ENCODE measurements at regions of chr4 and their contacts with region 1.

Region 1: GRCh38 chr4:74675673-74676279 is 118.5 kb downstream of the BTC start:
- DNase-seq: peak in 2 of 9 experiments; percentile 21 to 48
- ATAC-seq: peak; percentile 34
- H3K4me3 ChIP-seq: no peak overlapping the region
- H3K4me3 Mint-ChIP-seq: no peak overlapping the region
- H3K27ac ChIP-seq: no peak overlapping the region
- H3K27ac Mint-ChIP-seq: no peak overlapping the region
- H3K4me1 ChIP-seq: no peaks in the 10 kb centered on the region
- H3K4me1 Mint-ChIP-seq: no peaks in the 10 kb centered on the region
- H3K27me3 ChIP-seq: no peaks in the 10 kb centered on the region
- H3K27me3 Mint-ChIP-seq: no peaks in the 10 kb centered on the region
- CTCF ChIP-seq: peak; percentile 21

Region 2: GRCh38 chr4:74189331-74190043 is 486.3 kb before region 1 on chr4:
- CTCF ChIA-PET with region 1: interaction called, 3 read pairs
- POLR2A ChIA-PET with region 1: no interaction called
- intact Hi-C with region 1: loop called (anchors 1 to 10 kb)
- DNase-seq: peak in 2 of 9 experiments; percentile 56 to 70
- ATAC-seq: peak; percentile 57
- H3K4me3 ChIP-seq: no peak overlapping the region
- H3K4me3 Mint-ChIP-seq: no peak overlapping the region
- H3K27ac ChIP-seq: no peak overlapping the region
- H3K27ac Mint-ChIP-seq: no peak overlapping the region
- H3K4me1 ChIP-seq: no peaks in the 10 kb centered on the region
- H3K4me1 Mint-ChIP-seq: no peaks in the 10 kb centered on the region
- H3K27me3 ChIP-seq: no peaks in the 10 kb centered on the region
- H3K27me3 Mint-ChIP-seq: no peaks in the 10 kb centered on the region
- CTCF ChIP-seq: peak; percentile 68

Region 3: DNA sequence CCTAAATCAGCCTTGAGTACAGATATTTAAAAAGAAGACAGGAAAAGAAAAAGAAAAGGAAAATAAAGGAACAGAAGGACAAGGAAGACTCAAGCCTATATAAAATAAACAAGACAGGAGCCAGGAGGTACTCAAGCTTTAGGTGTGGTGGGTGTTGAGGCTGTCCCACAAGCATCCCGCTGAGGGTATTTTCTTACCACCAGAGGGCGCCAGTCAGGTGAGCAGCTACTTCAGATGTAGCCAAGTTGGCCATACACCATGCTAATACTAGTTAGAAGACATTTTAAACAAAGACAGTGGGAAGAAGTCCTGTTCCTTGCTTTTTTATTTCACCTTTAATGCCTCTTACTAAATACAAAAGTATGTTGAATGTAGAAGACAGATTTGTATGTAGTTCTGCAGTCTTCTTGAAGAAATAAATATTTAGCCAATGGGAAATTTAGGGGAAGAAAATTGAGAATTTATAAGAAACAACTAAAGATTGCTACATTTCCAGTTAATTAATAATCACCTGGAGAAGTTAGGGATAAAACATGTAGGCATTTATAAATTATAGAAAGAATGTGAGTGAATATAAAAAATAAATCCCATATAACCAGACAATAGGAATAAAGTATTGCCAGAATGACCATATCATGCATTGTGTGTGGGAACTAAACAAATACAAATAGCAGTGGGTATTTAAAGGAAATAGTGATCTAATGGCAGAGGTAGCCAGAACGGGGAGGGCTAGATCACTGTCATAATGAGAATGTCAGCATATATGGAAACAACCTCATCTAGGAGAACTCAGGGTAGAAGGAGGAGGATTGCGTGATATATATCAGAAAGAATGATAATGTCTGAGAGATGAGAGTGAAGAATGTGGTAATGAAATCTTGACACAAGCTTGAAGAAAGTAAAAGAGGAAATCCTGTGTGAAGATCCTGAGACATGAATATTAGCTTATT is 446.8 kb before region 1 on chr4:
- CTCF ChIA-PET with region 1: interaction called, 4 read pairs
- POLR2A ChIA-PET with region 1: no interaction called
- intact Hi-C with region 1: loop called (anchors 2 kb)
- DNase-seq: peak; percentile 46 to 76 (median 70)
- ATAC-seq: peak; percentile 71
- H3K4me3 ChIP-seq: no peak overlapping the region
- H3K4me3 Mint-ChIP-seq: no peak overlapping the region
- H3K27ac ChIP-seq: no peak overlapping the region
- H3K27ac Mint-ChIP-seq: no peak overlapping the region
- H3K4me1 ChIP-seq: no peaks in the 10 kb centered on the region
- H3K4me1 Mint-ChIP-seq: no peaks in the 10 kb centered on the region
- H3K27me3 ChIP-seq: no peaks in the 10 kb centered on the region
- H3K27me3 Mint-ChIP-seq: no peaks in the 10 kb centered on the region
- CTCF ChIP-seq: peak; percentile 85

Region 4: DNA sequence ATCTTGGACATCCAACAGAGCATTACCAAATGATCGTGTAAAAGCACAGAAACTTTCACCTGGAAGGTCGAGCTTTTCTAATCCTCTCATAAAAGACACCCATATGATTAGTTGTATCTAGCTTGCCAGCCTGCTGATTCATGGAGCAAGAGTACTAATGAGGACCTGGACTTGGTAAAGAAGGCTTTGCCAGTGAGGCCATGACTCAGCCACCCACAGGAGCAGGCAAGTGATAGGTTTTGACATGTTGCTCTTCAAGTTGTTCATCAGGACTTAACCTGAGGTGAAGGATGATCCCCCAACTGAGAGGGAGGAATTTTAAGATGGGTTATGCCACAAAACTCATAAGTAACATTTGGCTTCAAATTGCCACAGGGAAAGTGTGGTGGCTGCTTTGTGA is 392.2 kb before region 1 on chr4:
- CTCF ChIA-PET with region 1: no interaction called
- POLR2A ChIA-PET with region 1: no interaction called
- intact Hi-C with region 1: no loop called
- DNase-seq: no peak
- ATAC-seq: no peak
- H3K4me3 ChIP-seq: no peak overlapping the region
- H3K4me3 Mint-ChIP-seq: no peak overlapping the region
- H3K27ac ChIP-seq: no peak overlapping the region
- H3K27ac Mint-ChIP-seq: no peak overlapping the region
- H3K4me1 ChIP-seq: no peaks in the 10 kb centered on the region
- H3K4me1 Mint-ChIP-seq: no peaks in the 10 kb centered on the region
- H3K27me3 ChIP-seq: no peaks in the 10 kb centered on the region
- H3K27me3 Mint-ChIP-seq: no peaks in the 10 kb centered on the region
- CTCF ChIP-seq: no peak

Region 5: GRCh38 chr4:74370912-74371311 is 304.9 kb before region 1 on chr4:
- CTCF ChIA-PET with region 1: interaction called, 10 read pairs
- POLR2A ChIA-PET with region 1: no interaction called
- intact Hi-C with region 1: loop called in 1 of 2 experiments (anchors 2 kb)
- DNase-seq: peak in 3 of 9 experiments; percentile 26 to 60 (median 44)
- ATAC-seq: peak; percentile 78
- H3K4me3 ChIP-seq: no peak overlapping the region
- H3K4me3 Mint-ChIP-seq: no peak overlapping the region
- H3K27ac ChIP-seq: no peak overlapping the region
- H3K27ac Mint-ChIP-seq: no peak overlapping the region
- H3K4me1 ChIP-seq: no peaks in the 10 kb centered on the region
- H3K4me1 Mint-ChIP-seq: no peaks in the 10 kb centered on the region
- H3K27me3 ChIP-seq: no peaks in the 10 kb centered on the region
- H3K27me3 Mint-ChIP-seq: peaks cover 19% of the 10 kb centered on the region
- CTCF ChIP-seq: peak; percentile 53

Region 6: GRCh38 chr4:74376888-74377483 is 298.8 kb before region 1 on chr4:
- CTCF ChIA-PET with region 1: interaction called, 6 read pairs
- POLR2A ChIA-PET with region 1: no interaction called
- intact Hi-C with region 1: loop called (anchors 1 to 2 kb)
- DNase-seq: peak in 2 of 9 experiments; percentile 56 to 70
- ATAC-seq: peak; percentile 62
- H3K4me3 ChIP-seq: no peak overlapping the region
- H3K4me3 Mint-ChIP-seq: no peak overlapping the region
- H3K27ac ChIP-seq: no peak overlapping the region
- H3K27ac Mint-ChIP-seq: no peak overlapping the region
- H3K4me1 ChIP-seq: no peaks in the 10 kb centered on the region
- H3K4me1 Mint-ChIP-seq: no peaks in the 10 kb centered on the region
- H3K27me3 ChIP-seq: no peaks in the 10 kb centered on the region
- H3K27me3 Mint-ChIP-seq: peaks cover 12% of the 10 kb centered on the region
- CTCF ChIP-seq: peak; percentile 71

Measured in CD8-positive, alpha-beta T cell (primary cell).